ENCODE measurements at regions of chr2 and their contacts with region 1.

Region 1: DNA sequence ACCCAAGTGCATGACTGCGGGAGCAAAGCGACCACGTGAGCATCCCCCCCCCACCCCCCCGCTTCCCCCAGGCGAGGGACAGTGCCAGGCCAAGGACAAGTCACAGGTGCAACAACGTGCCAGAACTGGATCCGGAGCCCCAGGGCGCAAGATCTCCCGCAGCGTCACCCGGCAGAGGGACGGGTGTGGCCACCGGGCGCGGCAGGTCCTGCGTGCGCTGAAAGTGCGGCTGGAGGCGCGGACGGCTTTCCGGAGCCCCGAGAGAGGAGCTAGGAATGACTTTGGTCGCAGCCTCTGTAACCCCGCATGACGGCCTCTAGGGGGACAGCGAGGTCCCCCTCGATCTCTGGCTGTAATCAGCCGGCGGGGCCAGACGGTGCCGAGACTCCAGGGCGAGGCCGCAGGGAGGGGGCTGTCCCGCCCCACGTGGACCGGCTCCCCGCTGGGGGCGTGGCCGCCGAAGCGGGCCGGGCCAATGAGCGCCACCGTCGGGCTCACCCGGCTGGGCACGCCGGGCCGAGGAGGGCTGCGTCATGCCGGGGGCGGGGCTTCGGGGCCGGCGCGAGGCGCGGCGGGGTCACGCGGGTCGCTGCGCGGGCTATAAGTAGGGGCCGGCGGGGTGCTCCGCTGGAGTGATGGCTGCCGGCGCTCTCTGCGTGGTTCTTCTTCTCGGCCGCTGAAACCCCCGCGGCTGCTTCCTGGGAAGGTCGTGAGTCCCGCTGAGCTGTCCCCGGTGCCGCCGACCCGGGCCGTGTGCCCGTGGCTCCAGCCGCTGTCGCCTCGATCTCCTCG is at the start of gene SLC20A1:
- DNase-seq: peak; percentile 93 to 100 (median 98)
- ATAC-seq: peak; percentile 89
- H3K4me3 ChIP-seq: peak within 1 kb of the TSS; percentile 81
- H3K4me3 Mint-ChIP-seq: peak within 1 kb of the TSS; percentile 93
- H3K27ac ChIP-seq: peak within 1 kb of the TSS; percentile 79 to 85
- H3K27ac Mint-ChIP-seq: peak within 1 kb of the TSS; percentile 85
- H3K4me1 ChIP-seq: peaks cover 47% of the 10 kb centered on the region
- H3K4me1 Mint-ChIP-seq: peaks cover 54% of the 10 kb centered on the region
- H3K27me3 ChIP-seq: no peaks in the 10 kb centered on the region
- H3K27me3 Mint-ChIP-seq: no peaks in the 10 kb centered on the region
- CTCF ChIP-seq: peak; percentile 10
- total RNA-seq, gene SLC20A1: 130 to 139 TPM

Region 2: GRCh38 chr2:112519506-112519905 is 126.0 kb before region 1 on chr2:
- CTCF ChIA-PET with region 1: no interaction called
- POLR2A ChIA-PET with region 1: no interaction called
- intact Hi-C with region 1: no loop called
- DNase-seq: no peak
- ATAC-seq: no peak
- H3K4me3 ChIP-seq: no peak overlapping the region
- H3K4me3 Mint-ChIP-seq: no peak overlapping the region
- H3K27ac ChIP-seq: no peak overlapping the region
- H3K27ac Mint-ChIP-seq: no peak overlapping the region
- H3K4me1 ChIP-seq: no peaks in the 10 kb centered on the region
- H3K4me1 Mint-ChIP-seq: no peaks in the 10 kb centered on the region
- H3K27me3 ChIP-seq: no peaks in the 10 kb centered on the region
- H3K27me3 Mint-ChIP-seq: no peaks in the 10 kb centered on the region
- CTCF ChIP-seq: no peak

Region 3: DNA sequence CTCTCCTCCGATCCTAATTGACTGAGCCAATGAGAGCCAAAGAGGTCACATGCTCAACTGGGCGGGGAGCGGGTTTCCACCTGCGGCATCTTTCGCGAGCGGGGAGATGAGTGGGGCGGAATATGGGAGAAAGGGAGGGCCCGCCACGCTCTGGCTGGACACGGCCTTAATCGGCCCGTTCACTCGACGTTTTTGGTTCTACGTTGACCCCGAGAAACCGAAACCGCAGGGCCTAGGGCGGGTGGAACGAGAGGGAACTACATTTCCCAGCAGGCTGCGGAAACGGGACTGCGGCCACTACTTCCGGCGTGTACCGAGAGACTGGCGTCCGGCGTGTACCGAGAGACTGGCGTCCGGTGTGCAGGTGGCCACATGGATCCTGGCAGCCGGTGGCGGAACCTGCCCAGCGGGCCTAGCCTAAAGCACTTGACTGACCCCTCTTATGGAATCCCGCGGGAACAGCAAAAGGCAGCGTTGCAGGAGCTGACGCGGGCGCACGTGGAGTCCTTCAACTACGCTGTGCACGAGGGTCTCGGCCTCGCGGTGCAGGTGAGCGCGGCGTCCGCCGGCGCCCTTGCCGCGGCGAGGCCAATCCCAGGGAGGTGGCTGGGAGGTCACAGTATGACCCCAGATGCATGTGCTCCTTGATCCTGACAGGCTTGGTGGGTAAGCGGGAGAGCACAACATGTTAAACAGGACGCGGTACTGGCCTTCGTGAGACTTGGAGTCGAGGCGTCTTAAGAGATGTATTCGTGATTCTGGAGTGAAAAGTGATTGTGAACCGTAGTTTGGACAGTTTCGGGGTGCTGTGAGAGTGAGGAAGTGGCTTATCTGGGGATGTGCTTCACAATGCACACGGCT is 103.2 kb before region 1 on chr2 and contains the start of gene POLR1B:
- CTCF ChIA-PET with region 1: no interaction called
- POLR2A ChIA-PET with region 1: interaction called, 5 read pairs
- intact Hi-C with region 1: loop called in 1 of 2 experiments (anchors 5 kb)
- DNase-seq: peak in 13 of 14 experiments; percentile 54 to 85 (median 62)
- ATAC-seq: peak; percentile 81
- H3K4me3 ChIP-seq: peak within 1 kb of the TSS; percentile 94
- H3K4me3 Mint-ChIP-seq: no peak within 1 kb of the TSS
- H3K27ac ChIP-seq: peak within 1 kb of the TSS; percentile 81 to 93
- H3K27ac Mint-ChIP-seq: no peak within 1 kb of the TSS
- H3K4me1 ChIP-seq: peaks cover 24% of the 10 kb centered on the region
- H3K4me1 Mint-ChIP-seq: peaks cover 23% of the 10 kb centered on the region
- H3K27me3 ChIP-seq: no peaks in the 10 kb centered on the region
- H3K27me3 Mint-ChIP-seq: no peaks in the 10 kb centered on the region
- CTCF ChIP-seq: no peak
- total RNA-seq, gene POLR1B: 9.2 to 11.5 TPM

Region 4: DNA sequence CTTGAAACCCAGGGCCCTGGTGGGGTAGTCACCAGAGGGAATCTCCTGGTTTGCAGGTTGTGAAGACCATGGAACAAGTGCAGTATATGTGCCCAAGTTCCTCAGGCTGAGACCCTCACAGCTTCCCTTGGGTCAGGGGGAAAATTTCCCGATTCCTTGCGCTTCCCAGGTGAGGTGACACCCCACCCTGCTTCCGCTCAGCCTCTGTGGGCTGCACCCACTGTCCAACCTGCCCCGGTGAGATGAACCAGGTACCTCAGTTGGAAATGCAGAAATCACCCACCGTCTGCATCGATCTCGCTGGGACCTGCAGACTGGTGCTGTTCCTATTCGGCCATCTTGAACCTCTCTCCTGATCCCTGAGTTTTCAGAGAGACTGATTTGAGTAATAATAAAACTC is 30.5 kb before region 1 on chr2:
- CTCF ChIA-PET with region 1: no interaction called
- POLR2A ChIA-PET with region 1: no interaction called
- intact Hi-C with region 1: no loop called
- DNase-seq: peak in 1 of 14 experiments; percentile 17
- ATAC-seq: no peak
- H3K4me3 ChIP-seq: no peak overlapping the region
- H3K4me3 Mint-ChIP-seq: no peak overlapping the region
- H3K27ac ChIP-seq: no peak overlapping the region
- H3K27ac Mint-ChIP-seq: no peak overlapping the region
- H3K4me1 ChIP-seq: no peaks in the 10 kb centered on the region
- H3K4me1 Mint-ChIP-seq: no peaks in the 10 kb centered on the region
- H3K27me3 ChIP-seq: no peaks in the 10 kb centered on the region
- H3K27me3 Mint-ChIP-seq: no peaks in the 10 kb centered on the region
- CTCF ChIP-seq: no peak

Region 5: DNA sequence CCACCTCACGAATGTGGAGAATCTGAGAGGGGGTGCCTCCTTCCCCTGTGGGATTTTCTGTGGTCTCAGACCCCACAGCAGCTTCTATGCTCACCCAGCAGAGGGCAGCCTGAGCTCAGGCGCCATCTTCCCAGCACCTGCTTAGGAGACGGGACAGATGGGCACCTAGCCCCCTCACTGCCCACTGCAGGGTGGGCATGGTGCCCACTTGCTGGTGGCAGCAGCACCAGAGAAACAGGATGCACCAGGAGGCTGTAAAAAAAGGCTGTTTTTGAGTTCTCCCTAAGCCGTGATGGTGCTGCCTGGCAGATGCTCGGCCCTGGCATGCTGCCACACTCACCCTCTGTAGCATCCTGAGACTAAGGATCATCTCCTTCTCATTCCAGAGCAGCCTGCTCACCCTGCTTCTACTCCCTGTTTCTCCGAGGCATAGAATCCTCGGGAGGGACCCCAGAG is 18.9 kb before region 1 on chr2:
- CTCF ChIA-PET with region 1: interaction called, 36 read pairs
- POLR2A ChIA-PET with region 1: interaction called, 239 read pairs
- intact Hi-C with region 1: loop called (anchors 1 to 2 kb)
- DNase-seq: peak; percentile 43 to 83 (median 60)
- ATAC-seq: peak; percentile 38
- H3K4me3 ChIP-seq: peak overlapping the region; percentile 41
- H3K4me3 Mint-ChIP-seq: peak overlapping the region; percentile 74
- H3K27ac ChIP-seq: peak overlapping the region in 1 of 2 donors; percentile 33
- H3K27ac Mint-ChIP-seq: peak overlapping the region; percentile 90
- H3K4me1 ChIP-seq: peaks cover 72% of the 10 kb centered on the region
- H3K4me1 Mint-ChIP-seq: peaks cover 69% of the 10 kb centered on the region
- H3K27me3 ChIP-seq: no peaks in the 10 kb centered on the region
- H3K27me3 Mint-ChIP-seq: no peaks in the 10 kb centered on the region
- CTCF ChIP-seq: peak; percentile 95

Region 6: GRCh38 chr2:112685271-112685884 is 39.9 kb after region 1 on chr2:
- CTCF ChIA-PET with region 1: interaction called, 10 read pairs
- POLR2A ChIA-PET with region 1: no interaction called
- intact Hi-C with region 1: loop called in 1 of 2 experiments (anchors 5 kb)
- DNase-seq: no peak
- ATAC-seq: no peak
- H3K4me3 ChIP-seq: no peak overlapping the region
- H3K4me3 Mint-ChIP-seq: no peak overlapping the region
- H3K27ac ChIP-seq: no peak overlapping the region
- H3K27ac Mint-ChIP-seq: no peak overlapping the region
- H3K4me1 ChIP-seq: peaks cover 16% of the 10 kb centered on the region
- H3K4me1 Mint-ChIP-seq: peaks cover 5% of the 10 kb centered on the region
- H3K27me3 ChIP-seq: no peaks in the 10 kb centered on the region
- H3K27me3 Mint-ChIP-seq: no peaks in the 10 kb centered on the region
- CTCF ChIP-seq: no peak